T-cell (primary cell): ENCODE measurements at regions of chr1 and their contacts with region 1.

Region 1: DNA sequence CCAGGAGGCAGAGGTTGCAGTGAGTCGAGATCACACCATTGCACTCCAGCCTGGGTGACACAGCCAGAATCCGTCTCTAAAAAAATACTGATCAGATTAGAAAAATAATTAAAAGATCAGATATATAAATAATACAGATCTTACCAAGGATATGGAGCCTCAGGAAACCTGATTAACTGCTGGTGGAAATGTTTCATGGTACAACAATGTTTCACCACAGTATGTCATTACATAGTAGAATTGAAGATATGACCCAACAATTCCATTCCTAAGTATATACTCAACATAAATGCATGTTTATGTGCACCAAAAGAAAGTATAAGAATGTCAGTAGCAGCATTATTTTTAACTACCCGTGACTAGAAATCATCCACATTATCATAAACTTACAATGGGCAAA is 41.7 kb downstream of the CD53 start:
- DNase-seq: no peak
- ATAC-seq: no peak
- H3K4me3 ChIP-seq: no peak overlapping the region
- H3K4me3 Mint-ChIP-seq: no peak overlapping the region
- H3K27ac ChIP-seq: no peak overlapping the region
- H3K27ac Mint-ChIP-seq: no peak overlapping the region
- H3K4me1 ChIP-seq: peaks cover 0 to 6% of the 10 kb centered on the region in 2 experiments
- H3K4me1 Mint-ChIP-seq: peaks cover 12 to 16% (median 15%) of the 10 kb centered on the region in 3 donors
- H3K27me3 ChIP-seq: no peaks in the 10 kb centered on the region
- H3K27me3 Mint-ChIP-seq: peaks cover 0 to 3% of the 10 kb centered on the region in 2 donors

Region 2: DNA sequence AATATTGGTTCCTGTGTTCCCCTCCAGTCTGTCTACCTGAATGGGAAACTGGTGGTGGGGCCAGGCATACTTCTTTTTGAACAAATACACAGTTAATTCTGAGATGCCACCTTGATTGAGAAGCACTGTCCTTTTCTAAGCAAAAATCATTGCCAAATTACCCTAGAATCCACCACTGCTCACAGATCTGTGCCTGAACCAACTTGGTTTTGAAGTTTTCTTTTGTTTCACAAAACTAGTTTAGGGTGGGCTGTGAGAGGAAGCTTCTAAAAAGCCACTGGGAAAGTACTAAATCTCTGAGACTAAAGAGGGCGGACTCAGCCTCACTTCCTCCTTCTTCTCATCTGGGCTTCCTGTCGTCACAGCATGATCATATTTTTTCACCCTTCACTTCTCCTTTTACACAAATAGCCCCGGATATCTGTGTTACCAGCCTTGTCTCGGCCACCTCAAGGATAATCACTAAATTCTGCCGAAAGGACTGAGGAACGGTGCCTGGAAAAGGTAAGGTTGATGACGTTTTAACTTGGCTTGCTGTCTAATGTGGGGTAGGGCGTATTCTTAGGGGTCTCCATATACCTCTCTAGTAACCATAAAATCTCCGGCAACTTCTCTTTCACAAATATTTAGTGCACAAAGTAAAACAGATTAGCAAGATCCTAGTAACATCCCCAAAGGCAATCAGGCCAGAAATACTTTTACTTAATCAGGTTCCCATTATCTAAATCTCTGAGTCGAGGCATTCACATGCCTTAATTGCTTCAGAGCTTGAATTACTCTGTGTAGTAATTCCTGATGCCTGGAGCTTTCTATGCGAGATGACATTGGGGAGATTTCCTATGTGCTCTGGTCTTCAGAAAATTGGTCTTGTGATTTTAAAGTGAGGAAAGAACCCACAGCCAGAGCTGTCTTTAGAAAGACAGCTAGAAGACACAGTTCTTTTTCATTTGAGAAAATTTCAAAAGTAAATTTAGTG is 41.6 kb before region 1 on chr1 and contains the start of gene CD53:
- CTCF ChIA-PET with region 1: no interaction called
- POLR2A ChIA-PET with region 1: interaction called in 1 of 2 experiments, 13 read pairs
- DNase-seq: peak; percentile 7 to 86 (median 58)
- ATAC-seq: peak; percentile 52 to 83 (median 63)
- H3K4me3 ChIP-seq: peak within 1 kb of the TSS; percentile 75 to 96
- H3K4me3 Mint-ChIP-seq: peak within 1 kb of the TSS; percentile 97 to 99 (median 97)
- H3K27ac ChIP-seq: peak within 1 kb of the TSS; percentile 98
- H3K27ac Mint-ChIP-seq: peak within 1 kb of the TSS; percentile 98 to 99
- H3K4me1 ChIP-seq: peaks cover 35 to 39% of the 10 kb centered on the region in 2 experiments
- H3K4me1 Mint-ChIP-seq: peaks cover 56 to 86% (median 63%) of the 10 kb centered on the region in 3 donors
- H3K27me3 ChIP-seq: no peaks in the 10 kb centered on the region
- H3K27me3 Mint-ChIP-seq: no peaks in the 10 kb centered on the region
- total RNA-seq, gene CD53: 288 to 405 (median 386) TPM

Region 3: DNA sequence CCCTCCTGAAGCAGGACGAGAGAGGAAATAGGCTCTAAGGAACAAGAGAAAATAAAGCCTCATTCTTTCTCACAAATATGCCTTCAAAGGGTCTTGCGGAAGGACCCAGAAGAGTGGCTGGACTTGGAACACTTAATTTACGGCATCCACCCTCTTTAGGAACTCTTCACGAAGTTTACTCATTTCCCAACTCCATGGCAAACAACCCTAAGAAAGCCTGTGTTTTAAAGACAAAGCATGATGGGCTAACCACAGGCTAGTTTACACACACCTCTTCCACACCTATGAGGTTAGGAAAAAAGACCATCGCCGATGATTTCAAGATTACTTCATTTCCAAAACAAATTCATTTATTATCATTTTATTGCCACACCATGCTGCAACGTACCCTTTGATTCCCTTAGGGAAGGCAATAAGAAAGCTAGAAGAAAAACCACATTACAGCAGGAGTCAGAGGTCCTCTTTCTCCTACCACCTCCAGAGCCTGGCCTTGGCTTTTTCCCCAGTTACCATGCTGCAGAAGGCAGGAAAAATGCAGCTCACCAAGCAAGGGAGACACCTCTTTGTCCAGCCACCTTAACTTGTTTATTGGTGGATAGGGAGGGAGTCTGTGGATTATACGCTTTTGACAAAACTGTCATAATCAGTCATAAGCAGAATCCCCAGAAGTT is 342.4 kb after region 1 on chr1:
- CTCF ChIA-PET with region 1: no interaction called
- POLR2A ChIA-PET with region 1: no interaction called
- DNase-seq: no peak
- ATAC-seq: no peak
- H3K4me3 ChIP-seq: no peak overlapping the region
- H3K4me3 Mint-ChIP-seq: no peak overlapping the region
- H3K27ac ChIP-seq: no peak overlapping the region
- H3K27ac Mint-ChIP-seq: no peak overlapping the region
- H3K4me1 ChIP-seq: peaks cover 0 to 3% of the 10 kb centered on the region in 2 experiments
- H3K4me1 Mint-ChIP-seq: peaks cover 5 to 15% (median 14%) of the 10 kb centered on the region in 3 donors
- H3K27me3 ChIP-seq: no peaks in the 10 kb centered on the region
- H3K27me3 Mint-ChIP-seq: no peaks in the 10 kb centered on the region